Endothelial cell of umbilical vein (primary cell): ENCODE measurements at regions of chr15 and their contacts with region 1.

Region 1: DNA sequence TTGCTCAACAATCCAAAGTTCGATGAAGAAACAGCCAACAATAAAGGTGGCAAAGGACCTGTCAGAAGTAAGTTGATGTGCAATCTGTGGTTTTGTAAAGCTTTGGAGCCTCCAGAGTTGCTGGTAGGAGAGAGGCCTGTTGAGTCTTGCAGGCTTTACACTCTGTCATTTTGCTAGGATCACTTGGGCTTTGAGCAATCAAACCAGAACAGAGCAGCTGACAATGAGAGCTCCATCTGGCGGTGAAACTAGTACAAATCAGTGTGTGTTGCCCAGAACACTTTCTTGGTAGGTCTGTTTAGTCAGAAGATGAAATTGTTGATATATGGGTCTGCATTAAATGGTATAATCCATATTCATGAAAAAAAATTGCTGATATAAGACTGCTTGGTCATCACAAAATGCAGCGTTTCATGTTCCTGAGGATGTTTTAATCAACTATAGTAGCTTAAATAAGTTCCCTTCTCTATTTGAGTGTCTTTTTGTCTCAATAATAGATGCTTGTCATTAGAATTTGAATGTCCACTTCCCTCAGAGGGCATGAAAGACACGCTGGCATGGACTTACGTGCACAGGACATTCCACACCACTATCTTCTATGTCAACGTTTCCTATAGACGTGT is 25.7 kb downstream of the TMOD2 start:
- DNase-seq: peak; percentile 80
- H3K4me3 ChIP-seq: no peak overlapping the region
- H3K27ac ChIP-seq: no peak overlapping the region
- H3K4me1 ChIP-seq: no peaks in the 10 kb centered on the region
- H3K27me3 ChIP-seq: peaks cover 0 to 4% of the 10 kb centered on the region in 2 experiments
- CTCF ChIP-seq: peak; percentile 72 to 75
- POLR2A ChIP-seq: no peak

Region 2: GRCh38 chr15:51536965-51537574 is 240.0 kb before region 1 on chr15:
- CTCF ChIA-PET with region 1: interaction called, 79 read pairs
- POLR2A ChIA-PET with region 1: no interaction called
- dilution Hi-C with region 1: no loop called
- intact Hi-C with region 1: loop called (anchors 2 kb)
- DNase-seq: peak; percentile 31
- H3K4me3 ChIP-seq: no peak overlapping the region
- H3K27ac ChIP-seq: no peak overlapping the region
- H3K4me1 ChIP-seq: no peaks in the 10 kb centered on the region
- H3K27me3 ChIP-seq: no peaks in the 10 kb centered on the region
- CTCF ChIP-seq: peak; percentile 40 to 59
- POLR2A ChIP-seq: no peak

Region 3: DNA sequence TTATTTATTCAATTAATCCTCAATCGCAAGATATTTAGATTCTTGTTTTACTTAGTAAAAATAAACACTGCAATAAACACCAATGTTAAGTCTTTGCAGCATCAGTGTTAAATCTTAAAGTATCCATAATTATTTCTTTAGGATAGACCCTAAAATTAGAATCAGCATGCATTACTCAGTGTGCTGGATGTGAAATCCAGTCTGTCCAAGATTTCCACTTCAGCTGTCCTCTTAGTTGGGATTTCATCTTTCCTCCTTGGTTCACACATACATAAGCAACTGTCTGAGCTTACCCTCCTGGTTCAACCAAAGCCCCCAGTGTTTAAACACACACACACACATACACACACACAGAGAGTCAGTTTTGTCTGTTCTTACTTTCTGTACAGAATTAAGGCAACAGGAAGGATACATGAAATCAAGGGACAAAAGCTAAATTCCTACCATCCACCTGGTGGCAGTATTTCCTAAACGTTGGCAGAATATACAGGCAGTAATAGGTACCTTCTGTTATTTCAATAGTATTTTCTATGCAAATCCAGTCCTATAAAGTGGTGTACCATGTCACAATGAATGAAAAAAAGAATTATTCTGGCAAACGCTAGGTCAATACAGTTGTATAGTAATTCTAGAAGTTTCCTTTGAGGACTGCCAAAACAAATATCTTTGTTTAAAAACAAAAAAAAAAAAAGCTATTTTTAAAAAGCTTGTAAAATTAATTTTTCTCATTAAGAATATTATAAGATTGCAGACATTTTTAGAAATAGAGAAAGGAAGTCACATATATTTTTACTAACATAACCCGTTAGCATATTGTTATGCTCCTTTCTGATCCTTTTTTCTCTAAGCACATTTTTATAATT is 127.2 kb before region 1 on chr15:
- CTCF ChIA-PET with region 1: interaction called, 942 read pairs
- POLR2A ChIA-PET with region 1: no interaction called
- dilution Hi-C with region 1: no loop called
- intact Hi-C with region 1: loop called (anchors 1 kb)
- DNase-seq: peak; percentile 81
- H3K4me3 ChIP-seq: no peak overlapping the region
- H3K27ac ChIP-seq: no peak overlapping the region
- H3K4me1 ChIP-seq: peaks cover 2% of the 10 kb centered on the region
- H3K27me3 ChIP-seq: peaks cover 2 to 7% of the 10 kb centered on the region in 2 experiments
- CTCF ChIP-seq: peak; percentile 47 to 62
- POLR2A ChIP-seq: no peak

Region 4: GRCh38 chr15:51688863-51689262 is 88.2 kb before region 1 on chr15:
- CTCF ChIA-PET with region 1: interaction called, 21 read pairs
- POLR2A ChIA-PET with region 1: no interaction called
- dilution Hi-C with region 1: no loop called
- intact Hi-C with region 1: no loop called
- DNase-seq: no peak
- H3K4me3 ChIP-seq: no peak overlapping the region
- H3K27ac ChIP-seq: no peak overlapping the region
- H3K4me1 ChIP-seq: no peaks in the 10 kb centered on the region
- H3K27me3 ChIP-seq: peaks cover 12 to 37% of the 10 kb centered on the region in 2 experiments
- CTCF ChIP-seq: no peak
- POLR2A ChIP-seq: no peak

Region 5: GRCh38 chr15:51737280-51738017 is 39.6 kb before region 1 on chr15 and contains the start of gene LYSMD2:
- CTCF ChIA-PET with region 1: interaction called, 34 read pairs
- POLR2A ChIA-PET with region 1: no interaction called
- dilution Hi-C with region 1: no loop called
- intact Hi-C with region 1: loop called (anchors 5 kb)
- DNase-seq: peak; percentile 71
- H3K4me3 ChIP-seq: peak within 1 kb of the TSS; percentile 40 to 59 (median 52)
- H3K27ac ChIP-seq: no peak within 1 kb of the TSS
- H3K4me1 ChIP-seq: peaks cover 3% of the 10 kb centered on the region
- H3K27me3 ChIP-seq: no peaks in the 10 kb centered on the region
- CTCF ChIP-seq: no peak
- POLR2A ChIP-seq: no peak
- total RNA-seq, gene LYSMD2: 8.0 and 8.2 TPM in 2 replicates

Region 6: GRCh38 chr15:51829360-51830275 is 52.6 kb after region 1 on chr15 and contains the start of gene TMOD3:
- CTCF ChIA-PET with region 1: interaction called, 10 read pairs
- POLR2A ChIA-PET with region 1: no interaction called
- dilution Hi-C with region 1: no loop called
- intact Hi-C with region 1: no loop called
- DNase-seq: peak; percentile 94
- H3K4me3 ChIP-seq: peak within 1 kb of the TSS; percentile 88 to 97 (median 90)
- H3K27ac ChIP-seq: peak within 1 kb of the TSS; percentile 88
- H3K4me1 ChIP-seq: peaks cover 12% of the 10 kb centered on the region
- H3K27me3 ChIP-seq: no peaks in the 10 kb centered on the region
- CTCF ChIP-seq: peak in 1 of 2 donors; percentile 1
- POLR2A ChIP-seq: peak; percentile 91
- total RNA-seq, gene TMOD3: 63.7 and 64.3 TPM in 2 replicates